H1 (cell line): ENCODE measurements at regions of chr6 and their contacts with region 1.

Region 1: GRCh38 chr6:104325341-104326172 is 534.2 kb downstream of the HACE1 start:
- DNase-seq: no peak
- H3K4me3 ChIP-seq: no peak overlapping the region
- H3K27ac ChIP-seq: no peak overlapping the region
- H3K4me1 ChIP-seq: no peaks in the 10 kb centered on the region
- H3K27me3 ChIP-seq: no peaks in the 10 kb centered on the region
- CTCF ChIP-seq: peak in 2 of 3 experiments; percentile 37 to 52; a peak in 2 of 4 replicates
- EP300 ChIP-seq: no peak
- POLR2A ChIP-seq: no peak
- RAD21 ChIP-seq: peak; percentile 61 to 63

Region 2: GRCh38 chr6:104312851-104313250 is 12.7 kb before region 1 on chr6:
- CTCF ChIA-PET with region 1: interaction called, 22 read pairs
- POLR2A ChIA-PET with region 1: no interaction called
- DNase-seq: no peak
- H3K4me3 ChIP-seq: no peak overlapping the region
- H3K27ac ChIP-seq: no peak overlapping the region
- H3K4me1 ChIP-seq: no peaks in the 10 kb centered on the region
- H3K27me3 ChIP-seq: no peaks in the 10 kb centered on the region
- CTCF ChIP-seq: no peak
- EP300 ChIP-seq: no peak
- POLR2A ChIP-seq: no peak
- RAD21 ChIP-seq: no peak

Region 3: DNA sequence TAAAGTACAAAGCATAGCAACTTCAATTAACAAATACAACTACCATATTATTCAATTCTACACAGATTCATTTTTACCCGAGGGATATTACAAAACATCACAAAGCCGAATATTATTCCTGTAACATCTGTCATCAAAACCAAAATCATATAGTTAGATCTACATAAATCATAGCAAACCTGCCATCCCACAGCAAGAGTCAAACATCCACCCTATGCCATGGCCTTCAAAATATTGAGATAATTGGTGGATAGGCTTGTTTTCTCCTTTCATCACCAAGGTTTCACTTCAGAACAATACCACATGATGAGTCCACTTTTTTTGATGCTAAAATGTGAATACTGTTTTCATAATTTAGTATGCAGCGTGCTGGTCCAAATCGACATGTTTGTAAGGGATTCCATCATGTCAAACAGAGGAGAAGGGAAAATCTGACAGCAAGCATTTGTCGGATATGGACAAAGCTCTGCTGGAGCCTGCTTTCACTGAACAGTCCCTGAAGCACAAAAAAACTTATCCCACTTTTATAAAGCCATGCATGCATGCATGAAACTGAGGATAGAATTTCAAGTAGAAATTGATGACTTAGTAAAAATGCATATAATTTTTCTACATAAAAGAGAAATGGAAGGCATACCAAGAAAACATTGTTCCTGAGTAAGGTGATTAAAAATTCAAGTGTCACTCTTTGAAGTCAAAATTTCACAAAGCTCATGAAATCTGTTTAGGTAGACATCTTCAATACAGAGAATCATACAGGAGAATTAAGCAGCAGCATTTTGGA is 40.1 kb after region 1 on chr6:
- CTCF ChIA-PET with region 1: no interaction called
- POLR2A ChIA-PET with region 1: no interaction called
- DNase-seq: no peak
- H3K4me3 ChIP-seq: no peak overlapping the region
- H3K27ac ChIP-seq: no peak overlapping the region
- H3K4me1 ChIP-seq: no peaks in the 10 kb centered on the region
- H3K27me3 ChIP-seq: no peaks in the 10 kb centered on the region
- CTCF ChIP-seq: no peak
- EP300 ChIP-seq: no peak
- POLR2A ChIP-seq: no peak
- RAD21 ChIP-seq: no peak

Region 4: DNA sequence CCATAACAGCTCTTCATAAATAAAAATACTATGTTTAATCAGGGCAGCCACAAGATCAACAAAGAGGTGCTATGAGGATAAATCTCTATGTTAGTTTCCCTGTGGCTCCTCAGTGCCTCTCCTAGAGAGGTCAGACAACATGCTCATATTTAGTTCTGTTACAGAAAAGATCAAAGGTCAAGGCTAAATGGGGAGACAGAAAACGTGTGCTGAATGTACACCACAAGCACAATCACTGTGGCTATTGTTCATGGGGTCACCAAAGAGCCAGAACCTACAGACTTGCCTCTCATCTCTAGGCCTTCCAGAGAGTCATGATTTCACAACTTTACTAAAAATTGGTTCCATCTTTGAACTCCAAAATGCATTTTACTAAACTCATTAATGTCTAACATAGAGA is 124.4 kb after region 1 on chr6:
- CTCF ChIA-PET with region 1: no interaction called
- POLR2A ChIA-PET with region 1: no interaction called
- DNase-seq: no peak
- H3K4me3 ChIP-seq: no peak overlapping the region
- H3K27ac ChIP-seq: no peak overlapping the region
- H3K4me1 ChIP-seq: no peaks in the 10 kb centered on the region
- H3K27me3 ChIP-seq: peaks cover 0 to 1% (median 0%) of the 10 kb centered on the region in 4 experiments; a peak in 1 of 7 replicates
- CTCF ChIP-seq: no peak
- EP300 ChIP-seq: no peak
- POLR2A ChIP-seq: no peak
- RAD21 ChIP-seq: no peak

Region 5: GRCh38 chr6:104525677-104526312 is 200.2 kb after region 1 on chr6:
- CTCF ChIA-PET with region 1: interaction called, 10 read pairs
- POLR2A ChIA-PET with region 1: no interaction called
- DNase-seq: peak; percentile 29 to 80
- H3K4me3 ChIP-seq: no peak overlapping the region
- H3K27ac ChIP-seq: no peak overlapping the region
- H3K4me1 ChIP-seq: no peaks in the 10 kb centered on the region
- H3K27me3 ChIP-seq: no peaks in the 10 kb centered on the region
- CTCF ChIP-seq: peak; percentile 64 to 94 (median 85)
- EP300 ChIP-seq: no peak
- POLR2A ChIP-seq: no peak
- RAD21 ChIP-seq: peak; percentile 99